ENCODE measurements at regions of chr7 and their contacts with region 1.

Region 1: GRCh38 chr7:15015545-15016326 is 113.2 kb upstream of the DGKB start:
- DNase-seq: peak; percentile 55 to 63
- H3K4me3 ChIP-seq: peak overlapping the region; percentile 34 to 56 (median 36); a peak in 7 of 8 replicates
- H3K27ac ChIP-seq: peak overlapping the region; percentile 41; the same call in 1 of the 2 replicates
- H3K4me1 ChIP-seq: peaks cover 0 to 14% (median 6%) of the 10 kb centered on the region in 4 experiments; a peak in 3 of 7 replicates
- H3K27me3 ChIP-seq: no peaks in the 10 kb centered on the region
- CTCF ChIP-seq: peak in 2 of 3 experiments; percentile 54 to 60; a peak in 2 of 4 replicates
- EP300 ChIP-seq: no peak; a peak in 1 of 3 replicates
- POLR2A ChIP-seq: no peak
- RAD21 ChIP-seq: peak; percentile 74 to 78

Region 2: DNA sequence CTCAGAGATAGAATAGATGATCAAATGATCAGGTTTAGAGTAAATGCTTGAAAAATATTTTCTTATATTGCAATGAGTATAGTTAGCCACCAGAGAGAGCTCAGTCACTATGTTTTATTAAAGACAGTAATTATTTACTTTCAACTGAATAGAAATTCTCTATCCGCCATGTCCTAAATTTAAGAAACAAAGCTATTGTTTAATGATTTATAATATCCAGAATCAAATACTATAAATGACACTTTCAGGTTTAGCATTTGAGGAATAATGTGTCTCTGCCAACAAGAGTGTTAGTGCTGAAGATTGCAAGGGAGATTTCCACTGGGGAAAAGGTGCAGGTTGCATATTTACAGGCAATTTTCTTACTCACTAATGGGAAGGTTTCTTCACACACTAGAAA is 297.9 kb before region 1 on chr7:
- CTCF ChIA-PET with region 1: interaction called, 18 read pairs
- POLR2A ChIA-PET with region 1: no interaction called
- DNase-seq: no peak
- H3K4me3 ChIP-seq: no peak overlapping the region
- H3K27ac ChIP-seq: no peak overlapping the region
- H3K4me1 ChIP-seq: peaks cover 3 to 8% (median 4%) of the 10 kb centered on the region in 4 experiments; a peak in 4 of 7 replicates
- H3K27me3 ChIP-seq: no peaks in the 10 kb centered on the region
- CTCF ChIP-seq: peak in 2 of 3 experiments; percentile 15 to 25; a peak in 2 of 4 replicates
- EP300 ChIP-seq: no peak
- POLR2A ChIP-seq: no peak
- RAD21 ChIP-seq: peak in 1 of 2 experiments; percentile 73

Region 3: GRCh38 chr7:14734839-14735321 is 280.9 kb before region 1 on chr7:
- CTCF ChIA-PET with region 1: interaction called, 14 read pairs
- POLR2A ChIA-PET with region 1: no interaction called
- DNase-seq: peak; percentile 38 to 73
- H3K4me3 ChIP-seq: peak overlapping the region in 1 of 4 experiments; percentile 48; a peak in 2 of 8 replicates
- H3K27ac ChIP-seq: no peak overlapping the region
- H3K4me1 ChIP-seq: peaks cover 0 to 3% (median 1%) of the 10 kb centered on the region in 4 experiments; a peak in 4 of 7 replicates
- H3K27me3 ChIP-seq: no peaks in the 10 kb centered on the region
- CTCF ChIP-seq: peak; percentile 50 to 64 (median 59)
- EP300 ChIP-seq: no peak
- POLR2A ChIP-seq: no peak
- RAD21 ChIP-seq: peak; percentile 62 to 73

Region 4: GRCh38 chr7:15043931-15044330 is 28.2 kb after region 1 on chr7:
- CTCF ChIA-PET with region 1: interaction called, 11 read pairs
- POLR2A ChIA-PET with region 1: no interaction called
- DNase-seq: no peak
- H3K4me3 ChIP-seq: no peak overlapping the region
- H3K27ac ChIP-seq: no peak overlapping the region
- H3K4me1 ChIP-seq: no peaks in the 10 kb centered on the region
- H3K27me3 ChIP-seq: peaks cover 0 to 1% (median 0%) of the 10 kb centered on the region in 4 experiments; a peak in 1 of 7 replicates
- CTCF ChIP-seq: no peak
- EP300 ChIP-seq: no peak
- POLR2A ChIP-seq: no peak
- RAD21 ChIP-seq: no peak

Region 5: DNA sequence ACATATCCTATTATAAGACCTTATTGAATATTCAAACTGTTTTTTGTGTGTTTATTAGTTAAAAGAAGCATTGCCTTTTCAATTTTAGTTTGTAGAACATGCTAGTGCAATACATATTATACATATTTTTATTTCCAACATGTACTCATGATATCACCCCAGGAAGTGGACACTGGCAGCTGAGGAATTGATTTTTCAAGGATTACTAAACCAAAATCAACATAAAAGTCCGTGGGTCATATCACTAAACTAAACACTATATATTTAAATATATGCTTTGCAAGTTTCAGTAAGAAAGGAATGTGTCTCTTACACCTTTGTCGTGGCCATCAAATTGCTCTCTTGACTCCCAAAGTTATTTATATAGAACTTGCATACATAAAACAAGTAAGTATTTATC is 360.9 kb after region 1 on chr7:
- CTCF ChIA-PET with region 1: no interaction called
- POLR2A ChIA-PET with region 1: no interaction called
- DNase-seq: no peak
- H3K4me3 ChIP-seq: no peak overlapping the region
- H3K27ac ChIP-seq: no peak overlapping the region
- H3K4me1 ChIP-seq: no peaks in the 10 kb centered on the region
- H3K27me3 ChIP-seq: no peaks in the 10 kb centered on the region
- CTCF ChIP-seq: no peak
- EP300 ChIP-seq: no peak
- POLR2A ChIP-seq: no peak
- RAD21 ChIP-seq: no peak